K562 (cell line): ENCODE measurements at regions of chr18 and their contacts with region 1.

Region 1: DNA sequence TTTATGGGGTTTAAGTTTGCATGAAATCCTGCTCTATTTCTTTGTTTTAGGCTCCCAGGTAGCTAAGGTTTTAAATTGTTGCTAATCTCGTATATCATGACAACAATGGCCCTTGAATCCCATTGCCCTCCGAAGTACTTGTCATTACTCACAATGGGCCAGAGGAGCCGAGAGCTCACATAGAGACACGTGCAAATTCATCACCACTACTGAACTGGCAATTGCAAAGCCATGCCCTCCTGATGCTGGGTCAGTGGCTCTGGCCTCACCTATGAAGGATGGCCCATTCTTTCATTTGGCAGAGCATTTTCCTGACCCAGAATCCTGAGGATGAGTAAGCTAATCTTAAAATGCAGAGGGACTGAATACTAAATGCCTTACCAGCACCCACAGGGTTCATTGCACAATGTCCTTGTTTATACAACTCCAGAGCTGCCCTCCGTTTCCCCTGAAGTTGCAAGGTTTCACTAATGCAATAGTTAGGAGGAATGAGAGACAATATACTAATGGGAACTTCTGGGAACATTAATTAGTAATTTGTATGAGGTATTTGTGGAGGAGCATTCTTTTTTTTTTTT is 71.6 kb upstream of the GAREM1 start:
- DNase-seq: no peak
- ATAC-seq: no peak
- H3K4me3 ChIP-seq: no peak overlapping the region
- H3K27ac ChIP-seq: no peak overlapping the region
- H3K4me1 ChIP-seq: no peaks in the 10 kb centered on the region
- H3K27me3 ChIP-seq: no peaks in the 10 kb centered on the region
- CTCF ChIP-seq: no peak
- EP300 ChIP-seq: no peak
- POLR2A ChIP-seq: no peak
- RAD21 ChIP-seq: no peak

Region 2: GRCh38 chr18:32592323-32592722 is 50.0 kb after region 1 on chr18:
- CTCF ChIA-PET with region 1: no interaction called
- POLR2A ChIA-PET with region 1: no interaction called
- in situ Hi-C with region 1: no loop called
- intact Hi-C with region 1: loop called (anchors 5 kb)
- DNase-seq: no peak
- ATAC-seq: no peak
- H3K4me3 ChIP-seq: no peak overlapping the region
- H3K27ac ChIP-seq: no peak overlapping the region
- H3K4me1 ChIP-seq: no peaks in the 10 kb centered on the region
- H3K27me3 ChIP-seq: no peaks in the 10 kb centered on the region
- CTCF ChIP-seq: no peak
- EP300 ChIP-seq: no peak
- POLR2A ChIP-seq: no peak
- RAD21 ChIP-seq: no peak

Region 3: GRCh38 chr18:32958746-32959145 is 416.4 kb after region 1 on chr18:
- CTCF ChIA-PET with region 1: no interaction called
- POLR2A ChIA-PET with region 1: no interaction called
- in situ Hi-C with region 1: no loop called
- intact Hi-C with region 1: no loop called
- DNase-seq: no peak
- ATAC-seq: no peak
- H3K4me3 ChIP-seq: no peak overlapping the region
- H3K27ac ChIP-seq: no peak overlapping the region
- H3K4me1 ChIP-seq: no peaks in the 10 kb centered on the region
- H3K27me3 ChIP-seq: no peaks in the 10 kb centered on the region
- CTCF ChIP-seq: no peak
- EP300 ChIP-seq: no peak
- POLR2A ChIP-seq: no peak
- RAD21 ChIP-seq: no peak